K562 (cell line): ENCODE measurements at regions of chr17 and their contacts with region 1.

Region 1: DNA sequence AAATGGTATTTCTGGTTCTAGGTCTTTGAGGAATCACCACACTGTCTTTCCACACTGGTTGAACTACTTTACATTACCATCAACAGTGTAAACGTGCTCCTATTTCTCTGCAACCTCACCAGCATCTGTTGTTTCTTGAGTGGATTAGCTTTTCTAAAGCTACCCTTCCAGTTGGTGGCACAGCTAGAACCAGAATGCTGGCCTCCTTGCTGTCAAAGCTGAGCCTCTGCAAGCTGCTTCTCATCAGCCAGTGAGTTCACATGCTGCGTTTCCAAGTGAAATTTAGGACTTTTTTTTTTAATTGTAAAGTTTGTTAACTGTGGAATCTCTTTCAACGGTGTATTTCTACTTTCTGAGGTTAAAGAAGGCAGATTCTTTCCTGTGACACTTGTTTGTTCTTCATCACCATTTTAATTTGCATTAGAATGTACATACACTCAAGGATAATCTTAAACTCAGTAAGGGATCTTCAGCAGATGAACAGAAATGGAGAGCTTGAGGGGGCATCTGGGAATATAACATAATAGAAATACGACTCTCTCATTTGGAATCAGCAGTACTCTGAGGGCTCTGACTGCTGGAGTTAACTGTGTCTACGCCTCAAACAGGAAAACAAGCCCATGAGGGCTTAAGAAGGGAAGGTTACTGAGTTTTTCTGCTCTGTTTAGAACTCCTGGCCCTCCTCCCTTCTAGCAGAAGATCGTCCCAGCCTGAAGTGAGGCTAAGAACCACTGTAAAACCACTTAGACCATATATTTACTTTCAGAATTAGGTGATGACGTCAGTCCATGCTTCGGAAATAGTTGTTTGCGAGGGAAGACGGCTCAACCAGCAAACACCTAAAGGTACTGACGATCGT is 148.4 kb upstream of the FAM20A start:
- DNase-seq: no peak
- ATAC-seq: peak; percentile 42; the same call in 2 of the 3 replicates
- H3K4me3 ChIP-seq: no peak overlapping the region
- H3K27ac ChIP-seq: no peak overlapping the region
- H3K4me1 ChIP-seq: no peaks in the 10 kb centered on the region
- H3K27me3 ChIP-seq: peaks cover 8 to 9% of the 10 kb centered on the region in 2 experiments; a peak in 4 of 5 replicates
- CTCF ChIP-seq: no peak
- EP300 ChIP-seq: no peak
- POLR2A ChIP-seq: no peak
- RAD21 ChIP-seq: no peak

Region 2: GRCh38 chr17:68634403-68634802 is 115.2 kb before region 1 on chr17:
- CTCF ChIA-PET with region 1: no interaction called
- POLR2A ChIA-PET with region 1: no interaction called
- in situ Hi-C with region 1: no loop called
- intact Hi-C with region 1: loop called (anchors 5 kb)
- DNase-seq: peak; percentile 10 to 29 (median 20)
- ATAC-seq: peak; percentile 88
- H3K4me3 ChIP-seq: no peak overlapping the region
- H3K27ac ChIP-seq: no peak overlapping the region
- H3K4me1 ChIP-seq: no peaks in the 10 kb centered on the region
- H3K27me3 ChIP-seq: peaks cover 2 to 11% of the 10 kb centered on the region in 2 experiments; a peak in 2 of 5 replicates
- CTCF ChIP-seq: peak; percentile 22 to 53 (median 36); a peak in 3 of 6 replicates
- EP300 ChIP-seq: no peak
- POLR2A ChIP-seq: no peak
- RAD21 ChIP-seq: no peak

Region 3: GRCh38 chr17:68812876-68813584 is 63.5 kb after region 1 on chr17:
- CTCF ChIA-PET with region 1: no interaction called
- POLR2A ChIA-PET with region 1: no interaction called
- in situ Hi-C with region 1: no loop called
- intact Hi-C with region 1: no loop called
- DNase-seq: no peak
- ATAC-seq: no peak
- H3K4me3 ChIP-seq: no peak overlapping the region
- H3K27ac ChIP-seq: no peak overlapping the region
- H3K4me1 ChIP-seq: no peaks in the 10 kb centered on the region
- H3K27me3 ChIP-seq: peaks cover 0 to 6% of the 10 kb centered on the region in 2 experiments; a peak in 2 of 5 replicates
- CTCF ChIP-seq: no peak
- EP300 ChIP-seq: no peak
- POLR2A ChIP-seq: no peak
- RAD21 ChIP-seq: no peak